ENCODE measurements at regions of chr3 and their contacts with region 1.

Region 1: GRCh38 chr3:184513276-184514170 is 48.1 kb upstream of the EPHB3 start:
- DNase-seq: peak; percentile 88 to 93 (median 90)
- H3K4me3 ChIP-seq: peak overlapping the region; percentile 2 to 78 (median 52)
- H3K27ac ChIP-seq: no peak overlapping the region
- H3K4me1 ChIP-seq: peaks cover 3 to 17% (median 17%) of the 10 kb centered on the region in 4 experiments
- H3K27me3 ChIP-seq: peaks cover 0 to 11% (median 0%) of the 10 kb centered on the region in 5 experiments

Region 2: GRCh38 chr3:184371570-184372018 is 141.9 kb before region 1 on chr3:
- CTCF ChIA-PET with region 1: interaction called, 66 read pairs
- POLR2A ChIA-PET with region 1: interaction called, 3 read pairs
- DNase-seq: peak; percentile 82 to 93 (median 89)
- H3K4me3 ChIP-seq: no peak overlapping the region
- H3K27ac ChIP-seq: no peak overlapping the region
- H3K4me1 ChIP-seq: peaks cover 0 to 8% (median 2%) of the 10 kb centered on the region in 4 experiments
- H3K27me3 ChIP-seq: peaks cover 0 to 5% (median 0%) of the 10 kb centered on the region in 5 experiments

Region 3: GRCh38 chr3:184423561-184423960 is 90.0 kb before region 1 on chr3:
- CTCF ChIA-PET with region 1: interaction called, 34 read pairs
- POLR2A ChIA-PET with region 1: interaction called, 3 read pairs
- DNase-seq: peak in 2 of 3 donors; percentile 65 to 70
- H3K4me3 ChIP-seq: no peak overlapping the region
- H3K27ac ChIP-seq: no peak overlapping the region
- H3K4me1 ChIP-seq: no peaks in the 10 kb centered on the region
- H3K27me3 ChIP-seq: no peaks in the 10 kb centered on the region

Region 4: GRCh38 chr3:184474897-184475296 is 38.6 kb before region 1 on chr3:
- CTCF ChIA-PET with region 1: interaction called, 104 read pairs
- POLR2A ChIA-PET with region 1: interaction called, 3 read pairs
- DNase-seq: no peak
- H3K4me3 ChIP-seq: no peak overlapping the region
- H3K27ac ChIP-seq: no peak overlapping the region
- H3K4me1 ChIP-seq: peaks cover 5 to 47% (median 35%) of the 10 kb centered on the region in 4 experiments
- H3K27me3 ChIP-seq: no peaks in the 10 kb centered on the region

Region 5: GRCh38 chr3:184523825-184524615 is 10.5 kb after region 1 on chr3:
- CTCF ChIA-PET with region 1: interaction called, 23 read pairs
- POLR2A ChIA-PET with region 1: interaction called, 4 read pairs
- DNase-seq: peak; percentile 64 to 83 (median 68)
- H3K4me3 ChIP-seq: no peak overlapping the region
- H3K27ac ChIP-seq: no peak overlapping the region
- H3K4me1 ChIP-seq: peaks cover 7 to 30% (median 17%) of the 10 kb centered on the region in 4 experiments
- H3K27me3 ChIP-seq: no peaks in the 10 kb centered on the region